Calu3 (cell line): ENCODE measurements at regions of chr18 and their contacts with region 1.

Region 1: DNA sequence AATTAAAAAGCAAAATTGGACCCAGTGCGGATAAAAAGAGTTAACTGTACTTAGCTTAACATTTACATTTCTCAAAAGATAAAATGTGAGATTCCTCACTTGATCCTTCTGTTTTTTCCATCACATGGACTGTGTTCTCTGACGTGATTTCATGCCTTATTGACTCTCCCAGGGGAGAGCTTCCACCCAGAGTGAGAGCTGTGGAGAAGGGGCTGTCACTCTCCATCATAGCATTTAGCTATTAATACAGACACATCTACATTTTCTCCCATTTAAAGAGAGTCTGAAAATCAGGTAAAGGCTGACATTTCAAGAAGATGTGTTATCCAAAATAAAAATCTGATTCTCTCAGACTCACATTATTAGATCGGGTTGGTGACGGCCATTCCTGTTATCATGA is 493.8 kb downstream of the FBXO15 start:
- DNase-seq: no peak
- H3K4me3 Mint-ChIP-seq: no peak overlapping the region
- H3K27ac Mint-ChIP-seq: no peak overlapping the region
- H3K4me1 Mint-ChIP-seq: no peaks in the 10 kb centered on the region
- H3K27me3 Mint-ChIP-seq: no peaks in the 10 kb centered on the region
- CTCF ChIP-seq: no peak

Region 2: DNA sequence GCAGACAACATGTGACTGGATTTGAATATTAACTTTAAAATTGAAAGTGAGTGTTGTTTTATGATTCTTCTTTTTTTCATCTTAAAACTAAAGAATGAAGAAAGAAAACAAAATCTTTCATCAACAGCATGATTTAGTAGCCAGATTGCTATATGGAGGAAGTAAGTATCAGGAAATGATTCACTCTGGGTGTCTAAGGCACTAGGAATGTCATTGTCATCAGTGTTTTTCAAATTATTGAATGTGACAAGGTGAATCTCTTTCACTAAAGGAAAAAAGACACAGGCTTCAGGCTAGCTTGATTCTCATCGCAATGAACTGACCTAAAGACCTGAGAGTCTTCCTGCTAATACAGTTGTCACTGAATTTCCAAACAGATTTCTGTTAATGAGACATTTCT is 63.7 kb after region 1 on chr18:
- CTCF ChIA-PET with region 1: no interaction called
- intact Hi-C with region 1: loop called (anchors 10 kb)
- DNase-seq: no peak
- H3K4me3 Mint-ChIP-seq: no peak overlapping the region
- H3K27ac Mint-ChIP-seq: peak overlapping the region; percentile 50
- H3K4me1 Mint-ChIP-seq: peaks cover 21% of the 10 kb centered on the region
- H3K27me3 Mint-ChIP-seq: no peaks in the 10 kb centered on the region
- CTCF ChIP-seq: no peak

Region 3: GRCh38 chr18:73741946-73742345 is 88.1 kb after region 1 on chr18:
- CTCF ChIA-PET with region 1: no interaction called
- intact Hi-C with region 1: no loop called
- DNase-seq: no peak
- H3K4me3 Mint-ChIP-seq: no peak overlapping the region
- H3K27ac Mint-ChIP-seq: no peak overlapping the region
- H3K4me1 Mint-ChIP-seq: no peaks in the 10 kb centered on the region
- H3K27me3 Mint-ChIP-seq: no peaks in the 10 kb centered on the region
- CTCF ChIP-seq: no peak